ENCODE measurements at regions of chr2 and their contacts with region 1.

Region 1: GRCh38 chr2:151437630-151438029 is 27.9 kb downstream of the RIF1 start:
- DNase-seq: peak; percentile 37 to 68 (median 58)
- H3K4me3 ChIP-seq: no peak overlapping the region
- H3K27ac ChIP-seq: no peak overlapping the region
- H3K4me1 ChIP-seq: no peaks in the 10 kb centered on the region
- H3K27me3 ChIP-seq: no peaks in the 10 kb centered on the region

Region 2: DNA sequence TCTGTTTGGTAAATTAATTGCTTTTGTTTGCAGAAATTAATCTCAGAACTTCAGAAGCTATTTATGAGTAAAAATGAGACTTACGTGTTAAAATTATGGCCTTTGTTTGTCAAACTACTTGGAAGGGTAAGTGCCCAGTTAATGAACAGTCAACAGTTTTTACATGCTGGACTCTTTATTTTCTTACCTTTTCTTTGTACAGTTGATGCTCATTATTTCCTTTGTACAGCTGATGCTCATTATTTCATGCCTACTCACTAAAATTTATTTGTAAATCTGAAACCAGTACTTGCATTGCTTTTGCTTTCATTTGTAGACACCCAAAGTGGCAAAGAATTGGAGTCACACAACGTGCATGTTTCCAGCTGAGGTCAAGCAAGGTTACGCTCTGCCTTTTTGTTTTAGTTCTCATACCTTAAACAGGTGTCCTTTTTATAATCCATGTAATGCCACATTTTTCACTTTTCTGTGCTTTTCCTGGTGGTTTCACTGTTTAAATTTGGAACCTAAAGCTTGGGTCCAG is 14.7 kb before region 1 on chr2:
- CTCF ChIA-PET with region 1: interaction called, 10 read pairs
- POLR2A ChIA-PET with region 1: interaction called, 3 read pairs
- DNase-seq: no peak
- H3K4me3 ChIP-seq: no peak overlapping the region
- H3K27ac ChIP-seq: no peak overlapping the region
- H3K4me1 ChIP-seq: no peaks in the 10 kb centered on the region
- H3K27me3 ChIP-seq: no peaks in the 10 kb centered on the region

Region 3: DNA sequence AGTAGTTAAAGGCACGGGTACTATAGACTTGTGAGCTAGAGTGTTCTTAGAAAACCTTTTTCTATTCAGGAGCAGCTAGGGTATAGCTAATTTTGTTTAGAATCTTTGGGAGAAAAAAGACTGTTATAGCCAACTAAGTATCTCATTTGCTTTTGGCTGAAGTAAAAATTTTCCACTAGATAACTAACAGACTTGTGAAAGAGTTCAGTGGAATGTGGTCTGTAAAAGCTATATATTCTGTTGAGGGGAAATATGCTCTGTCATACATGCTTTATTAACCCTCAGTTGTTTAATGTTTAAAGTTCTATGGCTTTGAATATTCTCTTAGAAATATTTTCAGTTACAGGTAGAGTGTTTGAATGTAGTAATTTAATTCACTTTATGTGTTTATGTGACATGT is 21.7 kb after region 1 on chr2:
- CTCF ChIA-PET with region 1: interaction called, 13 read pairs
- POLR2A ChIA-PET with region 1: interaction called, 3 read pairs
- DNase-seq: no peak
- H3K4me3 ChIP-seq: no peak overlapping the region
- H3K27ac ChIP-seq: no peak overlapping the region
- H3K4me1 ChIP-seq: no peaks in the 10 kb centered on the region
- H3K27me3 ChIP-seq: no peaks in the 10 kb centered on the region